ENCODE measurements at regions of chr4 and their contacts with region 1.

Region 1: GRCh38 chr4:156322592-156322991 is 368.9 kb upstream of the CTSO start:
- DNase-seq: no peak
- H3K4me3 ChIP-seq: no peak overlapping the region
- H3K27ac ChIP-seq: no peak overlapping the region
- H3K4me1 ChIP-seq: no peaks in the 10 kb centered on the region
- H3K27me3 ChIP-seq: no peaks in the 10 kb centered on the region
- CTCF ChIP-seq: no peak
- POLR2A ChIP-seq: no peak

Region 2: GRCh38 chr4:156413239-156414135 is 90.9 kb after region 1 on chr4:
- intact Hi-C with region 1: no loop called
- DNase-seq: no peak
- H3K4me3 ChIP-seq: no peak overlapping the region
- H3K27ac ChIP-seq: no peak overlapping the region
- H3K4me1 ChIP-seq: no peaks in the 10 kb centered on the region
- H3K27me3 ChIP-seq: no peaks in the 10 kb centered on the region
- CTCF ChIP-seq: no peak
- POLR2A ChIP-seq: no peak

Region 3: GRCh38 chr4:156560701-156561100 is 238.1 kb after region 1 on chr4:
- intact Hi-C with region 1: loop called (anchors 5 kb)
- DNase-seq: no peak
- H3K4me3 ChIP-seq: no peak overlapping the region
- H3K27ac ChIP-seq: no peak overlapping the region
- H3K4me1 ChIP-seq: no peaks in the 10 kb centered on the region
- H3K27me3 ChIP-seq: no peaks in the 10 kb centered on the region
- CTCF ChIP-seq: no peak
- POLR2A ChIP-seq: no peak

Region 4: GRCh38 chr4:157776930-157777528 is 1454.4 kb after region 1 on chr4:
- intact Hi-C with region 1: no loop called
- DNase-seq: no peak
- H3K4me3 ChIP-seq: no peak overlapping the region
- H3K27ac ChIP-seq: no peak overlapping the region
- H3K4me1 ChIP-seq: no peaks in the 10 kb centered on the region
- H3K27me3 ChIP-seq: no peaks in the 10 kb centered on the region
- CTCF ChIP-seq: no peak
- POLR2A ChIP-seq: no peak